GM23248 (cell line): ENCODE measurements at regions of chr19 and their contacts with region 1.

Region 1: DNA sequence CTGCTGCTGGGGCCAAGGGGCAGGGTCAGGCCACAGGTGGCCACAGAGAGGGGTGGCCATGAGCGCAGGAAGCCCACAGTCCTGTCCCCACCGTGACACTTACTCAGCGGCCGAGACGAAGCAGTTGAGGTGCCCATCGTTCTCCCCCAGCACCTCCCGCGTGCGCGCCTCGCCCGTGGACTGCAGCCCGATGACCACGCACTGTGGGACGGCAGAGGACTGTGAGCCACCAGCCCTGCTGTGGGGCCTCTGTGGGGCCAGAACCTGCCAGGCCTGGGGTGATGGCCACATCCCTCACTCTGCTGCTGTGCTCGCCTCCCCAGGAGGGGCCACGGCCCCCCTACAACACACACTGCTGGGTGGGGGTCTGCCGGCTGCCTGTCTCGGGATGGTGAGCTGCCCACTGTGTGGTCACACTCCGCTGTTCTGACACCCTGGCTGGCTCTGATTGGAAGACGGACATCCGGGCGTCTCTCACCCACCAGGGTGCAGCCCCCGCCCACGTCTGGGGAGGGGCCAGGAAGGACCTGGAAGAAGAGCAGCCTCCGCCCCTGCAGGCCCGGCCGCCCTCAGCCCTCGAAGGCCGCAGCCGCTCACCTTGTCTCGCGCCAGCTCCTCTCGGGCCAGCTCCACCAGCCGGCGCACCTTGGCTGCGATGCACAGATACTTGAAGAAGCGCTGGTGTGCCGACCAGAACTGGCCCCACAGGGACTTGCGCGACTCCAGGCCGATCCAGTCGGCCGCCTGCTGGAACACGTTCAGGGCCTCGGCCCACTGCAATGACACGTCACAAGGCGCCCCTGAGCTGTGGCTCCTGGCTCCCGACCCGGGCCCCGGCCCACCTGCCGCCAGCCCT is 13.2 kb downstream of the GPX4 start:
- DNase-seq: no peak
- H3K4me3 ChIP-seq: no peak overlapping the region
- H3K27ac ChIP-seq: no peak overlapping the region
- H3K4me1 ChIP-seq: no peaks in the 10 kb centered on the region
- H3K27me3 ChIP-seq: no peaks in the 10 kb centered on the region

Region 2: DNA sequence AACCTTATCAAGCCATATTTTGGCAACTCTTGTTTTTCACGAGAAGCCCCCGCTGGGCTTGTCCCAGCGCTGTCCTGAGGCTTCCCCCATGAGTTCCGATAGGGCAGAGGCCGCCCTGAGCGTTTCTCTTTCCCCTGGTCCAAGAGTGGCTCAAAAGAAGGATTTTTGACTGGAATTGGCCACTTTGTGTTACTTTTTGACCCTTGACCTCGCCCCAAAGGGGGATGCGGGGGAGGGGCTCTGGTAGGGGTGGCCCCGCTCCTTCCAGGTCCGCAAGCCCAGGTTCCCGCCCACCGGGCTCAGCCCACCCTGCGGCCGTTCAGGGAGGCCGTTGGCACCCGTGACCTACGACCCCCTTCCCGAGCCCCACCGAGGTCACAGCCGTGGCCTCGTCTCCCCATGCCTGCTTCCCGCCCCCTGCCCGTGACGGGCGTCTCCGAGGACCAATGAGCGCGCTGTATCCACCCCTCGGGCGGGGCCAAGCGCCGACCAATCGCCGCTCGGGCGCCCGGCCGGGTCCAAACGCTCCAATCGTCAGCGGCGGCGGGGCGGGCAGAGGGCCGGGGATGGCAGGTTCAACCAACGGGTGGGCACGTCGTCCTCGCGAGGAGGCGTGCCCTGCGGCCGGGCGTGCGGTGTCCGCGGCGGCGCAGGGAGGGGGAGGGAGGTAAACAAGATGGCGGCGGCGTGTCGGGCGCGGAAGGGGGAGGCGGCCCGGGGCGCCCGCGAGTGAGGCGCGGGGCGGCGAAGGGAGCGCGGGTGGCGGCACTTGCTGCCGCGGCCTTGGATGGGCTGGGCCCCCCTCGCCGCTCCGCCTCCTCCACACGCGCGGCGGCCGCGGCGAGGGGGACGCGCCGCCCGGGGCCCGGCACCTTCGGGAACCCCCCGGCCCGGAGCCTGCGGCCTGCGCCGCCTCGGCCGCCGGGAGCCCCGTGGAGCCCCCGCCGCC is 88.4 kb after region 1 on chr19 and contains the start of gene STK11:
- in situ Hi-C with region 1: loop called (anchors 5 kb)
- DNase-seq: peak; percentile 100
- H3K4me3 ChIP-seq: peak within 1 kb of the TSS; percentile 88
- H3K27ac ChIP-seq: peak within 1 kb of the TSS; percentile 64
- H3K4me1 ChIP-seq: peaks cover 11% of the 10 kb centered on the region
- H3K27me3 ChIP-seq: no peaks in the 10 kb centered on the region
- total RNA-seq, gene STK11: 64.1 and 66.5 TPM in 2 replicates